ENCODE measurements at regions of chr10 and their contacts with region 1.

Region 1: DNA sequence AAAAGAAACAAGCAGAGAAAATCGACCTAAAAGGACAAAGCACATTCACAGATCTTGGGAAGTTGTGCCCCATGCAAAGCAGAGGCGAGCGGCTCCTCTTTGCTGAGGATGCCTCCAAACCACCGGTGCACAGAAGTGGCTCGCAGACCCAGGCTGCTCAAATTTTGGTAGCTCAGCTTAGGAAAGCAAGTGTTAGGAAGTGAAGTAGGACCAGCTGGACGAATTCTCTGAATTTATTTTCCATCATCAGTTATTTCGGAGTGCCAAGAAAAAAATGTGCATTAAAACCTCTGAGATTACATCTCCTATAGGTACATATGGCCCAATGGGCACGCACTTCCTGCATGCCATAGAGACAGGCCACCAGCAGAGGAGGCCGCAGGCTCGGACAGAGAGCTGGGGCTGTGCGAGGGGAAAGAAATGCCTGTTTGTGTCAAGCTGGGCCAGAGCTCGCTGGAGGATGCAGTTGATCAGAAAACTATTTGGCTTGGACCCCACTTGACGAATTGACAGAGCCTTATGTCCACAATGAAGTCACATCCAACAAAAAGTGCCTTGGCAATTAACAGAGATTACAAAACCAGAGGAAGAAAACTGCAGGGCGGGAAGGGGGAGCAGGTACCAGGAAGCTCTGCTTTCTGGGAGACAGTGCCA is 122.3 kb upstream of the LYZL2 start:
- DNase-seq: peak; percentile 71 to 77
- ATAC-seq: peak; percentile 95 to 99
- H3K4me3 ChIP-seq: no peak overlapping the region
- H3K27ac ChIP-seq: peak overlapping the region in 1 of 2 experiments; percentile 37; a peak in 1 of 6 replicates
- H3K4me1 ChIP-seq: 0 out of 3 replicates have a peak, but pooled peaks cover 3% of the 10 kb centered on the region
- CTCF ChIP-seq: peak; percentile 95
- EP300 ChIP-seq: no peak
- POLR2A ChIP-seq: no peak
- RAD21 ChIP-seq: peak; percentile 97 to 98

Region 2: GRCh38 chr10:30736685-30737232 is 15.0 kb before region 1 on chr10:
- CTCF ChIA-PET with region 1: interaction called, 34 read pairs
- POLR2A ChIA-PET with region 1: interaction called, 3 read pairs
- DNase-seq: peak; percentile 64 to 90
- ATAC-seq: peak; percentile 95
- H3K4me3 ChIP-seq: no peak overlapping the region
- H3K27ac ChIP-seq: peak overlapping the region; percentile 31 to 78
- H3K4me1 ChIP-seq: peaks cover 14% of the 10 kb centered on the region
- CTCF ChIP-seq: no peak
- EP300 ChIP-seq: peak in 1 of 2 experiments; percentile 46; a peak in 1 of 5 replicates
- POLR2A ChIP-seq: no peak
- RAD21 ChIP-seq: no peak

Region 3: DNA sequence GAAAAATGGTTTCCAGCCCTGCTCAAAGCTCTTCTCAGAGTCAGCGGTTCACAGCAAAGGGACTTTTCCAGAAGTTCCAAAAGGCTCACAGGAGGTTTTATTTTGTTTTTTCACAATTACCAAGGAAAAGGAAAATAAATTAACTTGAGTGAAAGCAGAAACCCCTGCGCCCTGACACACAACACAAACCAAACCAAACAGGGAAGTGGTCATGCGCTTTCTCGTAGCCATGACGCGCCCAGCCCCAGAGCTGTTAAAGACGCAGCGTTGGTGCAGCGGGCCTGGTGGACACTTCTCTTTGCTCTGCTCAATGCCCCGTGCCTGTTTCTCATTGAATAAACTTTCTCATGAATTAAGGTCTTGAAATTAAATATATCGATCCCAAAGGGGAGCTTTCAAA is 12.1 kb after region 1 on chr10:
- CTCF ChIA-PET with region 1: interaction called, 95 read pairs
- POLR2A ChIA-PET with region 1: no interaction called
- DNase-seq: no peak
- ATAC-seq: no peak
- H3K4me3 ChIP-seq: no peak overlapping the region
- H3K27ac ChIP-seq: no peak overlapping the region
- H3K4me1 ChIP-seq: no peaks in the 10 kb centered on the region
- CTCF ChIP-seq: no peak
- EP300 ChIP-seq: no peak
- POLR2A ChIP-seq: no peak
- RAD21 ChIP-seq: no peak

Region 4: GRCh38 chr10:30783939-30784500 is 32.2 kb after region 1 on chr10:
- CTCF ChIA-PET with region 1: interaction called, 10 read pairs
- POLR2A ChIA-PET with region 1: interaction called, 3 read pairs
- DNase-seq: peak; percentile 43 to 77
- ATAC-seq: peak; percentile 66 to 90; a peak in 5 of 6 replicates
- H3K4me3 ChIP-seq: no peak overlapping the region
- H3K27ac ChIP-seq: no peak overlapping the region
- H3K4me1 ChIP-seq: no peaks in the 10 kb centered on the region
- CTCF ChIP-seq: peak; percentile 77
- EP300 ChIP-seq: no peak
- POLR2A ChIP-seq: no peak
- RAD21 ChIP-seq: peak; percentile 86

Region 5: GRCh38 chr10:31808258-31809218 is 1056.7 kb after region 1 on chr10:
- CTCF ChIA-PET with region 1: interaction called, 18 read pairs
- POLR2A ChIA-PET with region 1: no interaction called
- DNase-seq: peak in 1 of 2 experiments; percentile 56
- ATAC-seq: peak; percentile 50 to 71; a peak in 5 of 6 replicates
- H3K4me3 ChIP-seq: no peak overlapping the region
- H3K27ac ChIP-seq: peak overlapping the region; percentile 8 to 74; a peak in 3 of 6 replicates
- H3K4me1 ChIP-seq: peaks cover 4% of the 10 kb centered on the region; the same call in 1 of the 3 replicates
- CTCF ChIP-seq: peak; percentile 81
- EP300 ChIP-seq: no peak
- POLR2A ChIP-seq: no peak
- RAD21 ChIP-seq: peak; percentile 67 to 82

Region 6: DNA sequence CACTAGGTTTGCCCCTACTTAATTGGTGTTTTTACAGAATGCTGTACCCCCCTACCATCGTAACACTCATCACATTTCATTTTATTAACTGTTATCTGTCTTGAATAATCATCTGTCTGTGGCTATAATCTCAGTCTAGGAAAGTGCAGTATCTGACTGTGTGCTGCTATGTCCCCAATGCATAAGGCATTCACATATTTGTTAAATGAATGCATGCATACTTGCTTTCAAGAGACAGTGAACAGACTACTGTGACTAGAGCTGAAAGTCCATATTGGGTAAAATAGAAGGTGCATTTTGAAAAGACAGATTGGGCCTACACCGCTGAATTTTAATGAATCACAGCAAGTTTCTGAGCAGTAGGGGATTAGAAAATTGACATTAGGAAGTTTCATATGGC is 1064.5 kb after region 1 on chr10:
- CTCF ChIA-PET with region 1: interaction called, 16 read pairs
- POLR2A ChIA-PET with region 1: no interaction called
- DNase-seq: no peak
- ATAC-seq: no peak
- H3K4me3 ChIP-seq: no peak overlapping the region
- H3K27ac ChIP-seq: no peak overlapping the region
- H3K4me1 ChIP-seq: no peaks in the 10 kb centered on the region
- CTCF ChIP-seq: no peak
- EP300 ChIP-seq: no peak
- POLR2A ChIP-seq: no peak
- RAD21 ChIP-seq: no peak